ENCODE measurements at regions of chr15 and their contacts with region 1.

Region 1: DNA sequence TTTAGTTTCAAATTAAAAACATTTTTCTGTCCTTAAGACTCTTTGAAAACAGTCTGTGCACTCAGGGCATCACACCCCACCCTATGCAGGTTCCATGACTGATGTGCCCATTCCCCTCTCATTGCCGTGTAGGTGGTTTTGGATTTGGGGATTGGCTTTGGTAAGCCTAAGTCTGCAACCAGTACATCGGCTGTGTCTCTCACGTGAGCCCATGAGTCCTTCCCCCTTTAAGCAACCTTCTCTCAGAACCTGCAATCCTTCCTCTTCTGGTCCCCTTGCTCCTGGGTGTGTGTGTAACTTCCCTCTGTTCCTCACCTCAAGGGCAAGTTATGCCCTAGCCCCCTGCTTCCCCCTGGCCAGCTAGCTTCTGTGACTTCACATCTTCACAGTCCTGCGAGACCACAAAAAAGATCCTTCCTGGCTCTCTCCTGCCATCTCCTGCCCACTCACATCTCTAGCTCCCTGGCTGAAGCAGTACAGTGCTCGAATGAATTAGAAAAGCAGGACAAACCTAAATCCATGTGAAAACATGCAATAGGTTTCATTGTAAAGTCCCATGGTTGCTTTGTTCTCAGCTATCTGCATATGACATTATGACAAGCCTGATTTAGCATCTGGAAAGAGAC is 126.7 kb downstream of the UACA start:
- DNase-seq: no peak
- H3K4me3 ChIP-seq: no peak overlapping the region
- H3K27me3 ChIP-seq: no peaks in the 10 kb centered on the region
- CTCF ChIP-seq: peak; percentile 36; the same call in 1 of the 2 replicates

Region 2: DNA sequence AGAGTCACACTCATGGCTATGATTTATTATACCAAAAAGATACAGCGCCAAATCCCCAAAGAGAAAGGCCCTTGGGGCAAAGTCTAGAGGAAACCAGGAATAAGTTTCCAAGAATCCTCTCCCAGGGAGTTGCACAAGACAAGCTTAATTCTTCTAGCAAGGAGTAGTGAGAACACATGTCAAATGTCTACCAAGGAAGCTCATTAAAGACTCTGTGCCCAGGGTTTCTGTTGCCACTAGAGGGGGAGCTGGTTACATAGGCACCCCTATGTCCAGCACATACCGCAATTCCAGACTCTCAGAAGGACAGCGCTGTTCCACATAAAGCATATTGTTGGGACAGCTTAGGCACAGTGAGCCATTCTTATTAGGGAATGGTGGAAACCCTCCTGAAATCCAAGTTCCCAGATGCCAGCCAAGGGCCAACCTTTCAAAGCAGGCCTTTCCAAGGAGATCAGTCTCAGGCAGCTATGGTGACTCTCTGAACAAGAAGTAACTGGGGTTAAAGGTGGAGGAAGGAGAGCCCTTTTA is 67.5 kb before region 1 on chr15:
- CTCF ChIA-PET with region 1: interaction called, 16 read pairs
- POLR2A ChIA-PET with region 1: no interaction called
- DNase-seq: no peak
- H3K4me3 ChIP-seq: no peak overlapping the region
- H3K27me3 ChIP-seq: peaks cover 1% of the 10 kb centered on the region
- CTCF ChIP-seq: peak; percentile 76